ENCODE measurements at regions of chr20 and their contacts with region 1.

Region 1: GRCh38 chr20:2688041-2688591 is 4.5 kb upstream of the EBF4 start:
- DNase-seq: peak; percentile 67 to 90 (median 77)
- ATAC-seq: peak; percentile 94
- H3K4me3 ChIP-seq: no peak overlapping the region
- H3K4me3 Mint-ChIP-seq: peak overlapping the region; percentile 66
- H3K27ac ChIP-seq: no peak overlapping the region
- H3K27ac Mint-ChIP-seq: no peak overlapping the region
- H3K4me1 ChIP-seq: peaks cover 22% of the 10 kb centered on the region
- H3K4me1 Mint-ChIP-seq: peaks cover 25% of the 10 kb centered on the region
- H3K27me3 ChIP-seq: peaks cover 0 to 3% of the 10 kb centered on the region in 2 experiments
- H3K27me3 Mint-ChIP-seq: peaks cover 35% of the 10 kb centered on the region
- CTCF ChIP-seq: peak; percentile 78

Region 2: DNA sequence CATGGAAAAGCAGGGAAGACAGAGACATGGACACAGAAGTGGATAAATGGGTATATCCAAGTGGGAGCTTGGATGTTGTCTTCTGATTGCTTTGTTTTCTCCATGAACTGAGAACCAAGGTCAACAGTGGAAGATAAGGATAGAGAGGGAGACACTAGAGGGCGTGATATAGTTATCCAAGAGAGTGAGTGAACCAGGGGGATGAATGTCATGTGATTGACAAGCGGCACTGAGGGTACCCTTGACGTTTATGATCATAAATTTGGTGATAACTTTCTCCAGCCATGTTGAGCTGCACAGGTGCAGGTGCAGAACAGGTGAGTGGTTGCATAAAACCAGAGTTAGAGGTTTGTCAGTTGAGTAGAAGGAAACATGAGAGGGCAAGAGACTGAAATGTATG is 25.2 kb after region 1 on chr20:
- CTCF ChIA-PET with region 1: interaction called, 6 read pairs
- POLR2A ChIA-PET with region 1: no interaction called
- intact Hi-C with region 1: loop called in 1 of 2 experiments (anchors 1 kb)
- DNase-seq: peak in 4 of 14 experiments; percentile 18 to 72 (median 66)
- ATAC-seq: peak; percentile 70
- H3K4me3 ChIP-seq: no peak overlapping the region
- H3K4me3 Mint-ChIP-seq: no peak overlapping the region
- H3K27ac ChIP-seq: no peak overlapping the region
- H3K27ac Mint-ChIP-seq: no peak overlapping the region
- H3K4me1 ChIP-seq: peaks cover 5% of the 10 kb centered on the region
- H3K4me1 Mint-ChIP-seq: no peaks in the 10 kb centered on the region
- H3K27me3 ChIP-seq: peaks cover under 1 to 5% of the 10 kb centered on the region in 2 experiments
- H3K27me3 Mint-ChIP-seq: peaks cover 4% of the 10 kb centered on the region
- CTCF ChIP-seq: peak; percentile 80

Region 3: DNA sequence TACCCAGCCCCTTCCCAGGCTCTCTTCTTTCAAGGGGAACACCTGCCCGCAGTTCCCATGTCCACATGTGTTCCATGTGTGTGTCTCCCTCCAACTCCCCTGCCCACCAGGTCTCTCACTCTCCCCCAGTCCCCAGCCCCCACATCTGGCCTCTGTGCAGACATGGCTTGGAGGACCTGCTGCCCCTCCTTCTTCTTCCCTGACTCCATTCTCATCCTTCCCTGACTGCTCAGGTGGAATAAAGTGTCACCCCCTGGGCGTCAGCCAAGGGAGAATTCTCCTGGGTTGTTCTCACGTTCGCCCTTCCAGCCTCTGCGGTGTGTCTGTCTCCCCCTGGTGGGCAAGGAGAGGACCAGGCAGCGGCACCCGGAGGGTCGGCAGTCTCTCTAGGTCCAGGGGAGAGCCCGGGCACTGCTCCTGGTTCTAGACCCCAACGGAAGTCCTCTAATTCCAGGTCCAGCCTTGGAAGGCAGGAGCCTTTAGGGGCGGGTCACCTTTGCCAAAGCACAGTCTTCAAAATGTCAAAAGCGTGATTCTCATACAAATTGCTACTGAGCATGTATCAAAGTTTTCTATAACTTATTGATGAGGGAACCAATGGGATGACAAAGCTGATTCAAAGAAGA is 54.9 kb after region 1 on chr20:
- CTCF ChIA-PET with region 1: interaction called, 15 read pairs
- POLR2A ChIA-PET with region 1: interaction called, 29 read pairs
- intact Hi-C with region 1: loop called (anchors 1 kb)
- DNase-seq: peak; percentile 60 to 88 (median 70)
- ATAC-seq: peak; percentile 54
- H3K4me3 ChIP-seq: no peak overlapping the region
- H3K4me3 Mint-ChIP-seq: peak overlapping the region; percentile 59
- H3K27ac ChIP-seq: peak overlapping the region in 1 of 2 donors; percentile 60
- H3K27ac Mint-ChIP-seq: peak overlapping the region; percentile 90
- H3K4me1 ChIP-seq: peaks cover 47% of the 10 kb centered on the region
- H3K4me1 Mint-ChIP-seq: peaks cover 51% of the 10 kb centered on the region
- H3K27me3 ChIP-seq: no peaks in the 10 kb centered on the region
- H3K27me3 Mint-ChIP-seq: no peaks in the 10 kb centered on the region
- CTCF ChIP-seq: peak; percentile 90

Region 4: GRCh38 chr20:2752567-2753460 is 64.7 kb after region 1 on chr20:
- CTCF ChIA-PET with region 1: interaction called, 29 read pairs
- POLR2A ChIA-PET with region 1: interaction called, 11 read pairs
- intact Hi-C with region 1: loop called (anchors 1 to 2 kb)
- DNase-seq: peak in 13 of 14 experiments; percentile 19 to 76 (median 47)
- ATAC-seq: peak; percentile 37
- H3K4me3 ChIP-seq: peak overlapping the region; percentile 60
- H3K4me3 Mint-ChIP-seq: peak overlapping the region; percentile 90
- H3K27ac ChIP-seq: no peak overlapping the region
- H3K27ac Mint-ChIP-seq: no peak overlapping the region
- H3K4me1 ChIP-seq: peaks cover 40% of the 10 kb centered on the region
- H3K4me1 Mint-ChIP-seq: peaks cover 28% of the 10 kb centered on the region
- H3K27me3 ChIP-seq: peaks cover 12 to 13% of the 10 kb centered on the region in 2 experiments
- H3K27me3 Mint-ChIP-seq: peaks cover 17% of the 10 kb centered on the region
- CTCF ChIP-seq: peak; percentile 81

Region 5: DNA sequence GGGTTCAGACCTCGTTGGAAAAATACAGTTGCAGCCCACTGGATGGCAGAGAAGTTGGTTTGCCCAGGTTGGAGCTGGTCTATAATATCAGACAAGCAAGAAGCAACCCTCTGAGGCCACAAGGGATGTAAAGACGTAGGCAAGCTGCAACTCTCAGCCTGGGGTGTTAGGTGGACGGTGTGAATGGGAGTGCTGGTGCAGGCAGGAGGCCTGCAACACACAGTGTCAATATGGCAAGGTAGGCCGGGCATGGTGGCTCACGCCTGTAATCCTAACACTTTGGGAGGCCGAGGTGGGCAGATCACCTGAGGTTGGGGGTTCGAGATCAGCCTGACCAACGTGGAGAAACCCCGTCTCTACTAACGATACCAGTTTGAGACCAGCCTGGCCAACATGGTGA is 163.0 kb after region 1 on chr20:
- CTCF ChIA-PET with region 1: interaction called, 3 read pairs
- POLR2A ChIA-PET with region 1: no interaction called
- intact Hi-C with region 1: loop called in 1 of 2 experiments (anchors 2 kb)
- DNase-seq: peak in 1 of 14 experiments; percentile 7
- ATAC-seq: no peak
- H3K4me3 ChIP-seq: no peak overlapping the region
- H3K4me3 Mint-ChIP-seq: no peak overlapping the region
- H3K27ac ChIP-seq: no peak overlapping the region
- H3K27ac Mint-ChIP-seq: no peak overlapping the region
- H3K4me1 ChIP-seq: peaks cover 17% of the 10 kb centered on the region
- H3K4me1 Mint-ChIP-seq: peaks cover 16% of the 10 kb centered on the region
- H3K27me3 ChIP-seq: no peaks in the 10 kb centered on the region
- H3K27me3 Mint-ChIP-seq: no peaks in the 10 kb centered on the region
- CTCF ChIP-seq: no peak

Region 6: GRCh38 chr20:2883726-2884637 is 195.9 kb after region 1 on chr20:
- CTCF ChIA-PET with region 1: no interaction called
- POLR2A ChIA-PET with region 1: no interaction called
- intact Hi-C with region 1: no loop called
- DNase-seq: no peak
- ATAC-seq: no peak
- H3K4me3 ChIP-seq: no peak overlapping the region
- H3K4me3 Mint-ChIP-seq: peak overlapping the region; percentile 3
- H3K27ac ChIP-seq: no peak overlapping the region
- H3K27ac Mint-ChIP-seq: no peak overlapping the region
- H3K4me1 ChIP-seq: peaks cover 19% of the 10 kb centered on the region
- H3K4me1 Mint-ChIP-seq: peaks cover 57% of the 10 kb centered on the region
- H3K27me3 ChIP-seq: no peaks in the 10 kb centered on the region
- H3K27me3 Mint-ChIP-seq: no peaks in the 10 kb centered on the region
- CTCF ChIP-seq: no peak

Region 7: GRCh38 chr20:3000852-3001523 is 312.9 kb after region 1 on chr20:
- CTCF ChIA-PET with region 1: no interaction called
- POLR2A ChIA-PET with region 1: no interaction called
- intact Hi-C with region 1: loop called (anchors 1 kb)
- DNase-seq: peak in 4 of 14 experiments; percentile 7 to 65 (median 56)
- ATAC-seq: peak; percentile 89
- H3K4me3 ChIP-seq: no peak overlapping the region
- H3K4me3 Mint-ChIP-seq: no peak overlapping the region
- H3K27ac ChIP-seq: no peak overlapping the region
- H3K27ac Mint-ChIP-seq: no peak overlapping the region
- H3K4me1 ChIP-seq: no peaks in the 10 kb centered on the region
- H3K4me1 Mint-ChIP-seq: no peaks in the 10 kb centered on the region
- H3K27me3 ChIP-seq: no peaks in the 10 kb centered on the region
- H3K27me3 Mint-ChIP-seq: no peaks in the 10 kb centered on the region
- CTCF ChIP-seq: peak; percentile 60

Region 8: DNA sequence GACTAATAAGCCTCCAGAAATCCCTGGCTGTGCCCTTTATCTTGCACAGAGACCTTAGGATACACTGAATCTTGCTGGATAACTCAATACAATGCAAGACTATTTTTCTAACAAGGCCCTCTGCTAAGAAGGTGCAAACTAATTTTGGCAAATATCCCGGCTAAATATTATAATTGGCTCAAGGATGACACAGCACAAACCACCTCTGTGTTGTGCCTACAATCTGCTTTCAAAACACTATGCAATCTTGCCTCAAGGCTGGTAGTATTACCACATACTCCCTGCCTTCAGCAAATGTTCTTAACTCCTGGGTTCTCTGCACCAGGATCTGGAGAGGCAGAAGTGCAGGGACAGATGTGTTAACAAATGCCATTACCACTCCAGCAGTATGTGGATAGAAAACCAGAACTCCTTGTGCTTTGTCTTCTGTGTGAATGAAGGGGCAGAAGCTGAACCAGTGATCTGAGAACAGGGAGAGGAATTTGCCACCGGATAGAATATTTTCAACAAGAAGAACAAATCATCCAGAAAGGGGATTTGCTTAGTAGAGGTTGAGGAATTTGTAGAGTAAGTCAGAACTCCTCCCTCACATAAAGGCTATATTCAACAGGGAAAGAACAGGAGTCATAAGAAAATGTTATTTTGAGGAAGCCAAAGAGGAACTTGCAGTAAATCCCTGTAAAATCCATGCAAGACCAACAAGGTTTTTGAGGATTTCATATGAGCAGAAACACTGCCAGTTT is 625.0 kb after region 1 on chr20:
- CTCF ChIA-PET with region 1: interaction called, 3 read pairs
- POLR2A ChIA-PET with region 1: no interaction called
- intact Hi-C with region 1: loop called in 1 of 2 experiments (anchors 10 kb)
- DNase-seq: no peak
- ATAC-seq: no peak
- H3K4me3 ChIP-seq: no peak overlapping the region
- H3K4me3 Mint-ChIP-seq: no peak overlapping the region
- H3K27ac ChIP-seq: no peak overlapping the region
- H3K27ac Mint-ChIP-seq: no peak overlapping the region
- H3K4me1 ChIP-seq: no peaks in the 10 kb centered on the region
- H3K4me1 Mint-ChIP-seq: no peaks in the 10 kb centered on the region
- H3K27me3 ChIP-seq: no peaks in the 10 kb centered on the region
- H3K27me3 Mint-ChIP-seq: no peaks in the 10 kb centered on the region
- CTCF ChIP-seq: no peak